SK-N-SH (cell line): ENCODE measurements at regions of chr1 and their contacts with region 1.

Region 1: DNA sequence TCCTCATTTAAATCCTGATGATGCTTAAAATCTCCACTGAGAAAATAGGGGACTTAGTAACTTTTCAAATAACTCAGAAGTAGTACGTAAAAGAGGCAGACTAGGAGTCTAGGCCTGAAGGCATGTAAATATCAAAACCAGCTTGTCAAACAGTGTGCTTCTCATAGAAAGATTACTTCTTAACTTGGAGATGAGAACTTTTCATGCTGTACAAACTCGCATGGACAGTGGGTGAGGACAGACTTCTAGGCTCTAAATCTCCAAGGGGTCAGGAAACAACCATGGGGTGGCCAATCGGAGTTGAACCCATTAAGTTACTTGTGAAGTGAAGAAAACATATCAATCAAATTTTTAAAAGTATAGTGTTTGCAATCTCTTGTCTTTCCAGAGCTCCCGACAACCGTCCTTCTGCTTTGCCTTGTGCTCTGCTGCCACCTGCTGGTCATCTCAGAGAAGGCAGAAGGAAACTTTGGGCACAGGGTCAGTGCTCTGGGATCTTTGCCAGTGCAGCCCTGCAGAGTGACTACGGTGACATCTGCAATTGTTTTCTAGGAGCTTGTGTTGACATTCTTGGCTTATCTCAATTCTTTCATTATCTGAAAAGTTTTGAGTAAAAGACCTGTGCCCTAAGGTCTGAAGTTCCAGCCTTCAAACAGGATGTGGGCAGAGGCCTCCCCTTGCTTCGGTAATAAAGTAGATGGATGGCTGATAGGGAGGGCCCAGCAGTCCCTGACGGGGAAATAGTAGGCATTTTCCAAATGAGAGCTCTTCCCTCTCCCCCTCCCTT is 105.1 kb upstream of the PDE4B start:
- DNase-seq: peak; percentile 70
- H3K4me3 ChIP-seq: no peak overlapping the region; a peak in 2 of 4 replicates
- H3K27ac ChIP-seq: no peak overlapping the region
- H3K4me1 ChIP-seq: peaks cover 0 to 6% of the 10 kb centered on the region in 2 experiments; a peak in 1 of 4 replicates
- H3K27me3 ChIP-seq: no peaks in the 10 kb centered on the region
- CTCF ChIP-seq: peak; percentile 89
- EP300 ChIP-seq: peak in 1 of 2 experiments; percentile 63; a peak in 2 of 4 replicates
- RAD21 ChIP-seq: peak; percentile 100

Region 2: DNA sequence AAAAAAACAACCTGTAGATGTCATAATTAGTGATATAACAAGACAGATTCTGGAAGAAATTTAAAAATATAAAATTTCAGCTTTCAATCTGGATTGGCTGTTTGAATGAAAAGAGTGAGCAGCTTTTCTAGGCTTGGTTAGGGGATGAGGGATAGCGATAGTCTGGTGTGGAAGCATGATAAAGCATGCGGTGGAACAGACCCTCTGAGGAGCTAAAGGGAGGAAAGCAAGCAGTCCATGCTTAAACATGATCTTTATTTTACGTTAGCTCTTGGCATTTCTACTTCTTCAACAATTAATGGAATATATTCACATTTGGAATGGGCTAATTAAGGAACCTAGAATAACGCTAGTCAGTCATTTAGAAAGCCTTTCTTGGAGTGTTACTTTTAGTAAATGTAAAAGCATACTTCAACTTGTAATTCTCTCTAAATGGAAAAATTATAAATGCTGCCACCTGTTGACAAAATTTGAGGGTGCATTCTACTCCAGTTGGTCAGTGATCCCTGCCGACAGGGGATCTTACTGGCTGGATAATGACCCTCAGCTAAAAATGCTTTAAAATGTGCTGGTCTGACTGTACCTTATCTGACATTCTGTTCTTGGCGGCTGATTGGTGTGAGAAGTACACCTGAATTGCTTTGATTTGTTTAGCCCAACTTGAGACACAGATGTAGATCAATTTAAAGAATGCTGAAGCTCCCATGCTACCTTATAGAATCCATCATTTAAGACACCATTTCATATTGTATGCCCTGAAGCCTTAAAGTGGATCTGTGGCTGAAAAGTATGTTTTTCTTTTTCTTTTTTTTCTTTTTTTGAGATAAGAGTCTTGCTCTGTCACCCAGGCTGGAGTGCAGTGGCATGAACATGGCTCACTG is 478.4 kb before region 1 on chr1:
- CTCF ChIA-PET with region 1: interaction called, 83 read pairs
- POLR2A ChIA-PET with region 1: no interaction called
- DNase-seq: peak; percentile 69
- H3K4me3 ChIP-seq: no peak overlapping the region
- H3K27ac ChIP-seq: no peak overlapping the region
- H3K4me1 ChIP-seq: no peaks in the 10 kb centered on the region
- H3K27me3 ChIP-seq: no peaks in the 10 kb centered on the region
- CTCF ChIP-seq: peak; percentile 72
- EP300 ChIP-seq: no peak
- RAD21 ChIP-seq: peak; percentile 69

Region 3: DNA sequence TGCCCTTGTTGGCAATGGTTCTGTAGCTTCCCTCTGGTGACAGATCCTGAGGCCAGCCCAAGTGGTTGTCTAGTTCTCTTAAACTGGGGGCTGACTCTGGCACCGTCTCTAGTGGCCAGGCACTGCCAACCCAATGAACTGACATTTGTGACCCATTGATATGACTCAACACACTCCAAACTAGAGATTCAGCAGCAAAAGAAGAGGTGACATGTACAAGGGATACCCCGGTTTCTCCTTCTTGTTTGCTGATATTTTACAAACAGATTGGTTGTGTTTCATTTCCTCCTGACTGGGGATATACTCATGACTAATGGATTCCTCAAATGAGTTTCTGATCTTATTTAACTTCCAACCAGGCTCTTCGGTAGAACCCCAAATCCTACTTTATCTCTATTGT is 444.1 kb before region 1 on chr1:
- CTCF ChIA-PET with region 1: interaction called, 13 read pairs
- POLR2A ChIA-PET with region 1: no interaction called
- DNase-seq: no peak
- H3K4me3 ChIP-seq: no peak overlapping the region
- H3K27ac ChIP-seq: no peak overlapping the region
- H3K4me1 ChIP-seq: peaks cover 0 to 5% of the 10 kb centered on the region in 2 experiments; a peak in 1 of 4 replicates
- H3K27me3 ChIP-seq: no peaks in the 10 kb centered on the region
- CTCF ChIP-seq: no peak
- EP300 ChIP-seq: no peak
- RAD21 ChIP-seq: no peak

Region 4: GRCh38 chr1:65431111-65431705 is 256.4 kb before region 1 on chr1:
- CTCF ChIA-PET with region 1: interaction called, 175 read pairs
- POLR2A ChIA-PET with region 1: interaction called, 3 read pairs
- DNase-seq: peak; percentile 47
- H3K4me3 ChIP-seq: no peak overlapping the region
- H3K27ac ChIP-seq: peak overlapping the region in 1 of 2 experiments; percentile 77; a peak in 1 of 4 replicates
- H3K4me1 ChIP-seq: peaks cover 0 to 17% of the 10 kb centered on the region in 2 experiments; a peak in 3 of 4 replicates
- H3K27me3 ChIP-seq: no peaks in the 10 kb centered on the region
- CTCF ChIP-seq: peak; percentile 78
- EP300 ChIP-seq: no peak
- RAD21 ChIP-seq: peak; percentile 82

Region 5: GRCh38 chr1:65674522-65674921 is 13.1 kb before region 1 on chr1:
- CTCF ChIA-PET with region 1: interaction called, 45 read pairs
- POLR2A ChIA-PET with region 1: no interaction called
- DNase-seq: no peak
- H3K4me3 ChIP-seq: no peak overlapping the region
- H3K27ac ChIP-seq: no peak overlapping the region
- H3K4me1 ChIP-seq: no peaks in the 10 kb centered on the region
- H3K27me3 ChIP-seq: no peaks in the 10 kb centered on the region
- CTCF ChIP-seq: no peak
- EP300 ChIP-seq: no peak
- RAD21 ChIP-seq: no peak

Region 6: GRCh38 chr1:65717815-65718454 is 30.3 kb after region 1 on chr1:
- CTCF ChIA-PET with region 1: interaction called, 12 read pairs
- POLR2A ChIA-PET with region 1: no interaction called
- DNase-seq: no peak
- H3K4me3 ChIP-seq: no peak overlapping the region
- H3K27ac ChIP-seq: no peak overlapping the region
- H3K4me1 ChIP-seq: no peaks in the 10 kb centered on the region
- H3K27me3 ChIP-seq: no peaks in the 10 kb centered on the region
- CTCF ChIP-seq: peak; percentile 49
- EP300 ChIP-seq: no peak
- RAD21 ChIP-seq: peak; percentile 29